Activated CD8-positive, alpha-beta memory T cell treated with anti-CD3 and anti-CD28 coated beads, Interleukin-2, amount 10 ng/mL, durations not matched to agents 7 days and 5 days (primary cell): ENCODE measurements at regions of chr14 and their contacts with region 1.

Region 1: DNA sequence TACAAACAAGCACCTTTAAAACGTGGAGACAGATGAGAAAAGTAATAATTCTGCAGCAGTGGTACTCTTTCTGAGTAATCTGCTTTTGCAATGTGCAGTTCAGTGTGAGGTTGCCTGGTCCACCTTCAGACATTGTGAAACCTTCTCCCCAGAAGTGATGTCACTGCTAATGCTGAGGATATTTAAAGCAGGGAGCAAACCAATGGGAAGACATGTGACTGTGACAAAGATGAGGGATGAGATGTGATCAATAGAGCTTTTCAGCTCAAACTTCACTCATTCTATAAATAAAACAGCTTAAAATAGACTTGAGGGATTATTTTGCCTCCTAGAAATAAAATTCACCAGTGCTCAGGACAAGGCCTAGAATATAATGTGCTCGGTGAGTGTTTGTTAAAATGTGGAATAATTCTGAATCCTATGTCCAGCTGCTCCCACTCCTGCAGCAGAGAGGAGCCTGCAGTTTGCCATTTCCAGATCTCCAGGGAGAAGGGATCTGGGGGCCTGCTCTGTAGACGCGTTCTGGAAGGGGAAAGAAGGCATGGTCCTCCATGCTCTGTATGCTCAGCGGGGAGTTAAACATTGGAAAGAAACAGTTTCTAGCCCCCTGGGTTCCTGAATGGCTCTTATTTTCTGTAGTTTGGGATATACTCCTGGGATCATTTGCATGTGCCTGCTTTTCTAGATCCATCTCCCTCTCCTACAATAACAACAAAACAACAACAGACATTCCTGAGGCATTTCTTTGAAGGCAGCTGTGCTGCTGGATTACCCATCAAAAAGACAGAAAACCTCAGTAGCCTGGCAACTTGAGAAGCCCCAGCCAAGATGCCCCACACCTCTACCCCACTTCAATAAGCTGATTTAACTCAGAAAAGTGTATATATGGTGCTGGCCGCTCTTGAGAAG is 8.9 kb downstream of the SLC7A8 start:
- DNase-seq: no peak
- ATAC-seq: no peak
- H3K4me3 Mint-ChIP-seq: no peak overlapping the region
- H3K27ac Mint-ChIP-seq: no peak overlapping the region
- H3K4me1 Mint-ChIP-seq: no peaks in the 10 kb centered on the region
- H3K27me3 Mint-ChIP-seq: peaks cover 32% of the 10 kb centered on the region

Region 2: GRCh38 chr14:22973217-22974032 is 201.1 kb before region 1 on chr14:
- CTCF ChIA-PET with region 1: no interaction called
- DNase-seq: peak; percentile 52
- ATAC-seq: peak; percentile 51
- H3K4me3 Mint-ChIP-seq: no peak overlapping the region
- H3K27ac Mint-ChIP-seq: no peak overlapping the region
- H3K4me1 Mint-ChIP-seq: no peaks in the 10 kb centered on the region
- H3K27me3 Mint-ChIP-seq: peaks cover 14% of the 10 kb centered on the region

Region 3: DNA sequence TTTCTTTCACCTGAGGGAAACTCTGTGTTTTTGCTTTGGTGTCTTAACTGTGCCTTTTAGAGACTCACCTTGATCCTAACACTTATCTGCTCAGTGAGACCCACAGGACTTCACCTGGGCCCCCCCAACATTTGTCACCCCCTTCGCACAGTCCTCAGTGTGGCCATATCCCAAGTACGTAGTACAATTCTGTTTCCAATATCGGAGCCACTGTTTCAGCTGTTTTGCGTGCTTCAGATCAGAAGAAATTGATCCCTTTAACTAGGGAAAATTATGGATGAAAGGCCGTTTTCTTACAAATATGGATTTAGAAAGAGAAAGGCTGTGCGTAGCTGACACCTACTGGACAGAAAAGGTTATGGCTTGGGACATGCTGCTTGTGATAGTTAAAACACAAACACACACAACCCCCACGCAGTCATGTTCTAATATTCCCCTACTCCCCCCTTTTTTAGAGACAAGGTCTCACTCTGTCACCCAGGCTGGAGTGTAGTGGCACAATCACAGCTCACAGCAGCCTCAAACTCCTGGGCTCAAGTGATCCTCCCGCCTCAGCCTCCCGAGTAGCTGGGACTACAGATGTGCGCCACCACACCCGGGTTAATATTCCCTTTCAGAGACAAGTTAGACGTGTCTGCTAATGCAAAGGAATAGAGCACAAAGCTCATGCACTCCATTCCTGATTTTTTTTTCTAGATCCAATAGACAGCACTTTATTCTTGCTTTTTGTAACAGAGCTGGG is 12.6 kb after region 1 on chr14:
- CTCF ChIA-PET with region 1: interaction called, 14 read pairs
- DNase-seq: no peak
- ATAC-seq: no peak
- H3K4me3 Mint-ChIP-seq: no peak overlapping the region
- H3K27ac Mint-ChIP-seq: no peak overlapping the region
- H3K4me1 Mint-ChIP-seq: no peaks in the 10 kb centered on the region
- H3K27me3 Mint-ChIP-seq: peaks cover 8% of the 10 kb centered on the region